Activated naive CD4-positive, alpha-beta T cell treated with anti-CD3 and anti-CD28 coated beads for 36 hours (primary cell): ENCODE measurements at regions of chr18 and their contacts with region 1.

Region 1: DNA sequence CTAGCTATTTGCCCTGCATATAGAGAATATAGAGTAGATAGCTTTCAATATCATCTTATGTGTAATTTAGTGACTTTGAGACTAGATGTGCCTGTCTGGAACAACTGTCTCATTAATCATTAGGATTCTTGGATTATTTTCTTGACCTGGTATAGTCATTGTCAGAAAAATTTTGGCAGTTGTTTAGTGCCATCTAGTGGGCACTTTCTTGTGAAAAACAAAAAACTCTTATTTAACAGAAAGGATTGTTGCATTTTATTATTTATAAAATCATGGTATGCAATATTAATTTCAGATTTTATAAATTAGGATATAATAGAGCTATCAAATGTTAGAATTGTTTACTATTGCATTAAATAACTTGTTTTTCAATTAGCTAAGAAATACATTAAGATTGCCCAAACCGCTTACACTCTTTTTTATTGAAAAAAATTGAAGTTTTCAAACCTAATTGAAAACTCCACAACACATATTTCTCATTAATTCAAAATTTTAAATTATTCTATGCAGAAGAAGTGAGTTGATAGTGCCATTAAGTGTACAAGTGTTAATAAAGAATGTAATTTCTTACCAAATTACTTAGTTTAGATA is 80.3 kb downstream of the DYNAP start:
- DNase-seq: no peak
- H3K4me3 Mint-ChIP-seq: no peak overlapping the region
- H3K27ac Mint-ChIP-seq: no peak overlapping the region
- H3K4me1 Mint-ChIP-seq: no peaks in the 10 kb centered on the region
- H3K27me3 Mint-ChIP-seq: peaks cover 7% of the 10 kb centered on the region

Region 2: DNA sequence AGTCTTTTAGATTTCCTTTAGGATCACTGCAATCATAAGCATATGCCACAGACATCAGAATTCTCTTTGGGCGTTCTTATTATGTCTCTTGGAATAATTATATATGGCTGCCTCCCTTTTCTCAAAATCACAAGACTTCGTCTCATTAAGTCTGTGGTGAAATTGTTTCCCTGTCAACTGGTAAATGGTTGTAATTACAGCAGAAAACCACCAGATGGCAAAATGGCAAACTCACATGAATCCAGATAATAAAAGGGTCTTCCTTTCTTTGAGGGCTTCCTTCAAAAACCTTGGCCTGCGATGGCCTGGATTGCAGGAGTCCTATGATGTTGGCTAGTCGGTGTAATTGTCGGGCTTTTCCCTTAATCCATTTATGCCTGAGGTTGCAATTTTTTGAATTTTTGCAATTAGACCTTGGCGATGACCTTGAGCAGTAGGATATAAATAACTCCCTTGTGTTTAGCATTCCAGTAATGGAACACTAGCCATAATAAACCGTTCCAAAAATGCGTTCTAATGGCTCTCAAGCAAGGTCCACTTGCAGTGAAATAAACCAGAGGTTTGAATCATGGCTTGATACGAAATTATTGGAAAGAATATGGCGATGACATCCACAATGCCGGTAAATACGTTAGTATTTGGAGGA is 1103.3 kb before region 1 on chr18:
- CTCF ChIA-PET with region 1: no interaction called
- intact Hi-C with region 1: loop called (anchors 5 kb)
- DNase-seq: no peak
- H3K4me3 Mint-ChIP-seq: no peak overlapping the region
- H3K27ac Mint-ChIP-seq: no peak overlapping the region
- H3K4me1 Mint-ChIP-seq: no peaks in the 10 kb centered on the region
- H3K27me3 Mint-ChIP-seq: peaks cover 3% of the 10 kb centered on the region

Region 3: DNA sequence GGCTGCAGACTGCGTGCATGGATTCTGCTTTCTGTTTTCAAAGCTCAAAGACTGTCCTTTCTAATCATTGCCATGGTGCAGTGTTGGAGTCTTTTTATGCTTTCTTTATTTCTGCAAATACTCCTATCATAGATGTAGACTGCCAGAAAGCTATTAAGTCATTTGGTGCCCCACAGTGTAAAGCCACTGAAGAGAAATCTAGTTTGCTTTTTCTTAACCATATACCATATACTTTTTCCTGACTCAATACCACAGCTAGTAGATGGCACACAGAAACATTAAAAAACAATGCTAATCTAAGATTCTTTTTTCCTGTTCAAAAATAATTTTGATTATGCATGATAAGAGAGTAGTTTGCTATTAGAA is 47.0 kb after region 1 on chr18:
- CTCF ChIA-PET with region 1: no interaction called
- intact Hi-C with region 1: no loop called
- DNase-seq: no peak
- H3K4me3 Mint-ChIP-seq: peak overlapping the region; percentile 60
- H3K27ac Mint-ChIP-seq: no peak overlapping the region
- H3K4me1 Mint-ChIP-seq: peaks cover 28% of the 10 kb centered on the region
- H3K27me3 Mint-ChIP-seq: peaks cover 12% of the 10 kb centered on the region